ENCODE measurements at regions of chr2 and their contacts with region 1.

Region 1: GRCh38 chr2:160994141-160995002 is 165.9 kb upstream of the TANK start:
- DNase-seq: peak; percentile 80
- H3K4me3 Mint-ChIP-seq: peak overlapping the region; percentile 29
- H3K27ac Mint-ChIP-seq: no peak overlapping the region
- H3K4me1 Mint-ChIP-seq: peaks cover 14% of the 10 kb centered on the region
- H3K27me3 Mint-ChIP-seq: no peaks in the 10 kb centered on the region
- CTCF ChIP-seq: peak; percentile 63

Region 2: DNA sequence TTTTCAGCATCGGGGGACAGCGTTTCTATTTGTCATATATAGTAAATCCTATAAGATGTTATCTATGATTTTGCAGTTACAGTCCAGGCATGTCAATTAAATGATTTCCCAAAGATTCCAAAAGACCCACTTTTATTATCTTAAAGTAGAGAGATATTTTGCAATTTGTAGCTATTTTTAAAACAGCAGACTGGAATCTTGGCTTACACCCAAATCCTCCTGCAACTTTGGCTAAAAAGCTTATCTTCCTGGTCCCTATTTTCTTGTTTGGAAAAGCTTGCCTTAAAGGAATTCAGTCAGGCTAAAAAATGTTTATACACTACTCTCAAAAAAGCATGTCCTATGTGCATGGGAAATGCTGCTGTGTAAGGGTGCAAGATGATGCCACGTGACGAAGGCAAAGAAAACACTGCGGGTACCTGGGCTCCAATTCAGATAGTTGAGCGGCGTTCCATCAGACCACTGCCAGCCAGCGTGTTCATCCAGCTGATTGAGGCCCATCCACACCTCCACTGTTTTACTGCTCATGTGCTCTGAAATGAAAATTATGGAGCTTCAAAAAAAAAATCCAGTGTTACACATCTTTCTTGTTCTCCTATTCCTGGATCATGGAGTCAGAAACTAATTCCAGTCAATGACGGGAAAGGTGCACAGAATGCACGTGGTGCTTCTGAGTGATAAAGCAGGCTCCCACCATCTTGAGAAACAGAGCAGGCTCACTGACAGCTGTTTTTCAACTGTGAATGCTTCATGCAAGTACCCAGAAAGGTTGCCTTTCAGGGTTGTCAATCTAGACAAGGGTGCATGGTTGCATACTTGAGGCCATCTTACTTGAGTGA is 965.7 kb before region 1 on chr2:
- CTCF ChIA-PET with region 1: no interaction called
- intact Hi-C with region 1: loop called (anchors 5 kb)
- DNase-seq: no peak
- H3K4me3 Mint-ChIP-seq: no peak overlapping the region
- H3K27ac Mint-ChIP-seq: no peak overlapping the region
- H3K4me1 Mint-ChIP-seq: no peaks in the 10 kb centered on the region
- H3K27me3 Mint-ChIP-seq: no peaks in the 10 kb centered on the region
- CTCF ChIP-seq: no peak

Region 3: GRCh38 chr2:160279813-160280465 is 714.4 kb before region 1 on chr2:
- CTCF ChIA-PET with region 1: interaction called, 3 read pairs
- intact Hi-C with region 1: loop called (anchors 5 kb)
- DNase-seq: no peak
- H3K4me3 Mint-ChIP-seq: no peak overlapping the region
- H3K27ac Mint-ChIP-seq: peak overlapping the region; percentile 60
- H3K4me1 Mint-ChIP-seq: peaks cover 57% of the 10 kb centered on the region
- H3K27me3 Mint-ChIP-seq: no peaks in the 10 kb centered on the region
- CTCF ChIP-seq: no peak

Region 4: DNA sequence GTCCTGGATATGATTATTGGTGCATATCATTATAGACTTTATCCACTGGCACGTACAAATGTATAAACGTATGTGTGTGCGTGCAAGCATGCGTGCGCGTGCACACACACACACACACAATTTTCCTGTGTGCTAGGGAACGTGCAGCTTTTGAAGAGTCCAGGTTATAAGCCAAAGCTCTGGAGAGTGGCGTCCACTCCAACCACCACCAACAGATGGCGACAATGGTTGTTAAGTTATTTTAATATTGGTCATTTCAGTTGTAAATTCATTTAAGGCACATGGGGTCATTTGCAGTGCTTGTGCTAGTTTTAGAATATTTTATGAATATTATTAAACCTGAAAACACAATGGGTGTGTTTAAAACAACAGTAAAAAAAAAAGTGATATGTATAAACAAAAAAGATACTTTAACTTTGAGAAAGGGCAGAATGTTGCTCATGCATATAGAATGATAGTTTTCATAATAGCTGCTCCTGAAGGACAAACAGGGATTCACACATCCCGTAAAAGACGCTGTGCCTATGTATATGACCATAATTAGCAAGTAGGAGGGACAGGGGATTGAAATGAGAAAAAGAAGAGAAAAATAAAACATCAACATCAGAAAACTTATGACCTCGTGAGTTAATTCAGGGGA is 670.1 kb before region 1 on chr2:
- CTCF ChIA-PET with region 1: interaction called, 9 read pairs
- intact Hi-C with region 1: loop called (anchors 2 kb)
- DNase-seq: peak; percentile 58
- H3K4me3 Mint-ChIP-seq: no peak overlapping the region
- H3K27ac Mint-ChIP-seq: no peak overlapping the region
- H3K4me1 Mint-ChIP-seq: peaks cover 56% of the 10 kb centered on the region
- H3K27me3 Mint-ChIP-seq: no peaks in the 10 kb centered on the region
- CTCF ChIP-seq: peak; percentile 56

Region 5: DNA sequence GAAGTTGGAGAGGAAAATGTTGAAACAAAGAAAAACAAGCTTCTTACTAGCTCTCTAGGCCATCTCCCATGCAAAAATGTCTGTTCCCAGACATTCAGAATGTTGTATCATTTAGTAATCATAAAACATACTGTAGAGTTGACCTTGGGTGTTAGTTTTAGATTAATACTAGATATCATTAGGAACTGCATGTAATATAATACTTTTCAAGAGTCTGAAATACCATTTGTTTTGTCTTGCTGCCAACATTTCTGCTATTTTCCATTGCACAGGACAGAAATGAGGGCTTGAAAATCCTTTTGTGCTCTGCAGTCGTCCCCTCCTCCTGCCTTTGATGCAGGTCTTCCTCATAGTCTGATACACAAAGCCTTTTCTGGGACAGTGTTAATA is 411.2 kb before region 1 on chr2:
- CTCF ChIA-PET with region 1: no interaction called
- intact Hi-C with region 1: no loop called
- DNase-seq: no peak
- H3K4me3 Mint-ChIP-seq: no peak overlapping the region
- H3K27ac Mint-ChIP-seq: no peak overlapping the region
- H3K4me1 Mint-ChIP-seq: peaks cover 21% of the 10 kb centered on the region
- H3K27me3 Mint-ChIP-seq: no peaks in the 10 kb centered on the region
- CTCF ChIP-seq: no peak

Region 6: GRCh38 chr2:161017780-161018470 is 23.6 kb after region 1 on chr2:
- CTCF ChIA-PET with region 1: no interaction called
- intact Hi-C with region 1: no loop called
- DNase-seq: no peak
- H3K4me3 Mint-ChIP-seq: no peak overlapping the region
- H3K27ac Mint-ChIP-seq: no peak overlapping the region
- H3K4me1 Mint-ChIP-seq: no peaks in the 10 kb centered on the region
- H3K27me3 Mint-ChIP-seq: peaks cover 14% of the 10 kb centered on the region
- CTCF ChIP-seq: no peak

Measured in Calu3 (cell line).